Right cardiac atrium (tissue), 5 donors: ENCODE measurements at regions of chr1 and their contacts with region 1.

Region 1: DNA sequence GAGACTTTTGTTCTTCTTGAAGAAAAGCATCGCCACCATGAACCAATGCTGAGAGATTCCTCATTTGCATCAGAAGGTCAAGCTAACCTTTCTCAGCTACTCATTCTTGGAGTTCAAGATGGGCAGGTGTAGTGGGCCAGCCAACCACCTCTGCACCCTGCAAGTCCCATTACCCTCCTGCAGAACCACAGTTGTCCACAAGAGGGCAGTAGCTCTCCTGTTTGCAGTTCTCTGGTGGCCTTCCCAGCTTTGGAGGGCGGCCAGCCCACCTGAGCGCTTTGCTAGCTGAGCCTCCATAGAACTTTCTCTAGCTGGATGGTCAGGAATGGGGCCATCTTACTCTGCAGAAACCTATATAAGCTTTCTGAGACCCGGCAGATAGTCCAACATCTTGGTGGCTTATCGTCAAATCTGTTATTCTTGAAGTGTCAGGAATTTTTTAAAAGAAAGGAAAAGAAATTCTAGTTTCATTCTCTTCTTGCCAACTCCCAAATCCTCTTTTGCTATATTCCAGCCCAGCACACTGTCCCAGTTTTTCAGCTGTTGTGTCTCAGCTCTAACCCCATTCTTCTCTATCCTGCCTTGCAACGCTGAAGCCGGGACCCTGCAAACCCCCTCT is 11.0 kb upstream of the LMX1A start:
- DNase-seq: peak; percentile 76 to 90 (median 83)
- ATAC-seq: peak; percentile 48 to 71
- H3K4me3 ChIP-seq: no peak overlapping the region
- H3K27ac ChIP-seq: no peak overlapping the region
- H3K4me1 ChIP-seq: no peaks in the 10 kb centered on the region
- H3K27me3 ChIP-seq: no peaks in the 10 kb centered on the region

Region 2: DNA sequence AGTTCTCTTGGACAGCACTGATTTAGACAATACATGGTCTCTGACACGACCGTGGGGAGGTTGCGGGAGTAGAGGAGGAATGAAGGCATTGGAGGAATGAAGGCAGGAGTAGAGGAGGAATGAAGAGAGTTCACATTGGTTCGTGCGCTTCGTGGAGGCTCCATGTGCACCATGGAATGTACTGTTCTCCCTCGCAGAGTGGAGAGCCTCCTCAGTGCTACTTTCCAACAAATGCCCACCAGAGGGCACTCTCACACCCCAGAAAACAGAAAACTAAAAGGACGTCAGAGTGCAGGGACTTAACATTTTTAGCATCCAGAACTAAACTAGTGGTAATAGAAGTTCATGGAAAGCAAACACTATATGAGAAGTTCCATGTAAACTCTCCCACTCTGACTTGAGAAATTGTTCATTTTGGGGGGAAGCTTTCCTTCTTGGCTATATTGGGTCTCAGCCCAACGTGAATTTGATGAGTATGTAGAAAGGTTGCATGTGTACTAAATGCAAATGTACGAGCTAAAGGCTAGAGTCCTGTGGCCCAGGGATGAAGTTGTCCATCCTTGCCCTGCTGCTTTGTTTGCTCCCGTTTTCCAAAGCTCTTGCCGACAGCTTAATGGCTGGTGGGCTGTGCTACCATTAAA is 222.6 kb before region 1 on chr1:
- intact Hi-C with region 1: loop called (anchors 5 to 10 kb)
- DNase-seq: peak in 1 of 3 donors; percentile 22
- ATAC-seq: peak; percentile 57 to 66
- H3K4me3 ChIP-seq: no peak overlapping the region
- H3K27ac ChIP-seq: no peak overlapping the region
- H3K4me1 ChIP-seq: no peaks in the 10 kb centered on the region
- H3K27me3 ChIP-seq: peaks cover 2% of the 10 kb centered on the region